Testis (tissue), 5 donors: ENCODE measurements at regions of chr2 and their contacts with region 1.

Region 1: DNA sequence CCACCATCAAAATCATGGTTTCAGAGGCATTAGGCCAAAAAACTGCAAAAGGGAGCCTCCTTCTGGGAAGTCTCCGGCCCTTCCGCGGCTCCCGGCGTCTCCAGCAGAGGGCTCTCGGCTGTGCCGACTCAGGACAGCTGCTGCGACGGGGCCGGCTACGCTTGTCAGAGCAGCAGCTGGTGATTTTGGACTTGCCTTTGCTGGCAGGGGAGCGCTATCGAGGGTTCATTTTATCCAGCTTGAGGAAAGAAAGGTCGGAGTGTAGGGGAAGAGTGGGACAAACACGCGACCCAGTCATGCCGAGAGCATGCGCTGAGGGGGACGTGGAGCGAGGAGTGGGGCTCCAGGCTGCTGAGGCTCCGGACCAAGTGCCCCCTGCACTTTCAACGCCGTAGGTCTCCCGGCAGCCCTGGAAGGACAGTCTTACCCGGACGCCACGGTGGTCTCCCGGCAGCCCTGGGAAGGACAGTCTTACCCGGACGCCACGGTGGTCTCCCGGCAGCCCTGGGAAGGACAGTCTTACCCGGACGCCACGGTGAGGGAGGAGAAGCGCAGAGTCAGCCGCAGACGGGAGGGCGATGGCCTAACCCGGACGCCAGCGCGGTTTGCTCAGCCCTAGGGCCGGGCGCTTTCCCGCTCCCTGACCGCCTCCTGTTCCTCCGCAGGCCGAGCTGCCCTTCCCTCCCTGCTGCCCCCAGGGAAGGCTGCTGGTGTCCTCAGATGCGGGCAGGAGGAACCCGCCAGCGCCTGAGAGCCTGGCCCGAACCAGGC is 21.7 kb downstream of the DDX18 start:
- DNase-seq: peak; percentile 90
- H3K4me3 ChIP-seq: peak overlapping the region; percentile 44 to 59
- H3K27ac ChIP-seq: no peak overlapping the region
- H3K4me1 ChIP-seq: peaks cover 7% of the 10 kb centered on the region
- H3K27me3 ChIP-seq: no peaks in the 10 kb centered on the region
- CTCF ChIP-seq: peak; percentile 49 to 77 (median 60)
- POLR2A ChIP-seq: no peak

Region 2: DNA sequence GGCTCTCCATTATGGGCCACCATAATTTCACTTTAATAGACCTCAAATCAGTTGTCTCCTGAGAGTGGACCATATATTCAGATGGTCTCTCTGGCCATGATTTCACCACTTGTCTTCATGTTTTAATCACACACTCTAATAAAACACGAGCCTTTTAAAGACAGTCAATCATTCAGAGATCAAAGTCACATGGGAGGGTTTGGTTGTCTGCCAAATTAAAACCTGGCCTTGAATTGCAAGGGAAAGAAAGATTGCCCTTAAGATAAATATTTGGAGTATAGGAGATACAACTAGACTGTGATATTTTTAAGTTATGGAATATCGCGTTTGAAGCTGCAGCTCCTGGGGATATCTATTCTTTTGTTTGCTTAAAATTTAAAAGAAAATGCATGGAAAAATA is 399.5 kb before region 1 on chr2:
- intact Hi-C with region 1: no loop called
- DNase-seq: no peak
- H3K4me3 ChIP-seq: no peak overlapping the region
- H3K27ac ChIP-seq: no peak overlapping the region
- H3K4me1 ChIP-seq: no peaks in the 10 kb centered on the region
- H3K27me3 ChIP-seq: no peaks in the 10 kb centered on the region
- CTCF ChIP-seq: no peak
- POLR2A ChIP-seq: no peak

Region 3: DNA sequence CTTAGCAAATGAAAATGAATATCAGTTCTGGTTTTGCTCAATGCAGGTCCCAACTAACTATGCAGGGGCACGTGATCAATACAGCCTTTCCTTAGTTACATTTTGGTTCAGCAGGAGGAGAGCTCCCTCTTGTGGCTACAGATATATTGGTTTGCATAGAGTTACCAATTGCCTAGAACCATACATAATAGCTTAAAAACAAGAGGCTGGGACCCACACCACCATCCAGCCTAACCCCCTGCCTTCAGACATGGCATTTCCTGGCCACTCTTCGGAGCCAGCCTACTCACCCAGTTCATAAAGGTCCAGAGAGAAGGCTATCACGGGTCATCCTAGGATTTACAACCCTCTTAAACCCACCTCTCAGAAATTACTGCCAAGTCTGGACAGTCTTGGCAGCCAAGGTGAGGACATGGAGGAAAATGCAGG is 167.2 kb after region 1 on chr2:
- intact Hi-C with region 1: loop called (anchors 10 kb)
- DNase-seq: peak; percentile 72
- H3K4me3 ChIP-seq: no peak overlapping the region
- H3K27ac ChIP-seq: no peak overlapping the region
- H3K4me1 ChIP-seq: peaks cover 5% of the 10 kb centered on the region
- H3K27me3 ChIP-seq: no peaks in the 10 kb centered on the region
- CTCF ChIP-seq: peak; percentile 70 to 90 (median 86)
- POLR2A ChIP-seq: no peak